ENCODE measurements at regions of chr7 and their contacts with region 1.

Region 1: GRCh38 chr7:149662591-149663095 is 110.7 kb downstream of the ZNF467 start:
- DNase-seq: peak; percentile 92
- ATAC-seq: peak; percentile 99
- H3K4me3 Mint-ChIP-seq: no peak overlapping the region
- H3K27ac Mint-ChIP-seq: no peak overlapping the region
- H3K4me1 Mint-ChIP-seq: peaks cover 4% of the 10 kb centered on the region; the same call in 1 of the 2 replicates
- H3K27me3 Mint-ChIP-seq: peaks cover 32% of the 10 kb centered on the region
- CTCF ChIP-seq: peak; percentile 50

Region 2: GRCh38 chr7:149642589-149642988 is 20.1 kb before region 1 on chr7:
- CTCF ChIA-PET with region 1: interaction called, 25 read pairs
- POLR2A ChIA-PET with region 1: no interaction called
- DNase-seq: no peak
- ATAC-seq: no peak
- H3K4me3 Mint-ChIP-seq: no peak overlapping the region
- H3K27ac Mint-ChIP-seq: no peak overlapping the region
- H3K4me1 Mint-ChIP-seq: no peaks in the 10 kb centered on the region
- H3K27me3 Mint-ChIP-seq: peaks cover 21% of the 10 kb centered on the region
- CTCF ChIP-seq: no peak

Region 3: DNA sequence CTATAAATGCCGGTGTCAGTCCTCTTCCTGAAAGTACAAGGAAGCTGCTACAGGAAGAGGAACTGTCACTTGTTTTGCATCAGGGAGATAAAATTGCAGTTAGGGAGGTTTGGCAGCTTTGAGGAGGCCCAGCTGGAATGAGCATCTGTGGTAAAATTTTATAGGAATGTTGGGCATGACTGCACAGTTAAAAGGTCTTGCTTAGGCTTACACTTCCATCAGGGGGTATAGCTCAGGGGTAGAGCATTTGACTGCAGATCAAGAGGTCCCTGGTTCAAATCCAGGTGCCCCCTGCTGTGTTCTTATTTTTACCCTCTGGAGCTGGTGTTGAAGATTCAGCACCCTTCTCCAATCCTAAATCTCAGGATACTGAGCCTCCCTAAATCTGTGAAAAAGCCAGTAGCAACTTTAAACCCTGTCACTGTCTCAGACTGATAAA is 44.8 kb after region 1 on chr7:
- CTCF ChIA-PET with region 1: interaction called, 164 read pairs
- POLR2A ChIA-PET with region 1: interaction called, 4 read pairs
- DNase-seq: no peak
- ATAC-seq: no peak
- H3K4me3 Mint-ChIP-seq: no peak overlapping the region
- H3K27ac Mint-ChIP-seq: no peak overlapping the region
- H3K4me1 Mint-ChIP-seq: peaks cover 24% of the 10 kb centered on the region
- H3K27me3 Mint-ChIP-seq: peaks cover 12% of the 10 kb centered on the region
- CTCF ChIP-seq: no peak

Region 4: DNA sequence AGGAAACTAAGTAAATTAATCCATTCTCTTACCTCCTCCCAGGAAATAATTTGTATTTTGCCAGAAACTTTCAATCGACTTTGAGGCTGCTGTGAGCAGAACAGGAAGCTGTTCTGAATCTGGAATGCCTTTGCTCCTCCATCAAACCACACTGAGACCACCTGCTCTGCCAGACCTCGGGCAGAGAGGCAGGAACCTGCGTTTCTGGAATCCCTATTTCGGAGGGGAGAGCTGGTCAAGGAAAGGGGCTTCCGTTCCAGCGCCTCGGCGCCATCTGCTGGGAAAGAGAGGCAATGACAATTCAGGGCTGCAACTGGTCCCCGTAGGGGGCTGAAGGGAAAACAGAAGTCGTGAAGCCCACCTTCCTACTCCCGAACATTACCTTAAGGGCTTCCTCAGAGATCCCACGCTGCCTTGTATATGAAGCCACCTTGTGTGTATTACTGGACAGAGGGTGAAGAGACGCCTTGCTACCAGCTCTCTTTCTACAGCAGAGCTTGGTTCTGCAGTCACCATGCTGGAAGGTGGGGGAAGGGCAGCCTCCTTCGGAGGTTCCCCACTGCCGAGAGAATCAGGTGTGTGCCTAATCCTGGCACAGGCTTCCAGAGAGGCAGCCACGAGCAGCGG is 79.5 kb after region 1 on chr7:
- CTCF ChIA-PET with region 1: interaction called, 140 read pairs
- POLR2A ChIA-PET with region 1: interaction called, 5 read pairs
- DNase-seq: peak; percentile 88
- ATAC-seq: peak; percentile 96
- H3K4me3 Mint-ChIP-seq: peak overlapping the region; percentile 73
- H3K27ac Mint-ChIP-seq: no peak overlapping the region
- H3K4me1 Mint-ChIP-seq: peaks cover 3% of the 10 kb centered on the region
- H3K27me3 Mint-ChIP-seq: peaks cover 15% of the 10 kb centered on the region
- CTCF ChIP-seq: peak; percentile 75

Region 5: DNA sequence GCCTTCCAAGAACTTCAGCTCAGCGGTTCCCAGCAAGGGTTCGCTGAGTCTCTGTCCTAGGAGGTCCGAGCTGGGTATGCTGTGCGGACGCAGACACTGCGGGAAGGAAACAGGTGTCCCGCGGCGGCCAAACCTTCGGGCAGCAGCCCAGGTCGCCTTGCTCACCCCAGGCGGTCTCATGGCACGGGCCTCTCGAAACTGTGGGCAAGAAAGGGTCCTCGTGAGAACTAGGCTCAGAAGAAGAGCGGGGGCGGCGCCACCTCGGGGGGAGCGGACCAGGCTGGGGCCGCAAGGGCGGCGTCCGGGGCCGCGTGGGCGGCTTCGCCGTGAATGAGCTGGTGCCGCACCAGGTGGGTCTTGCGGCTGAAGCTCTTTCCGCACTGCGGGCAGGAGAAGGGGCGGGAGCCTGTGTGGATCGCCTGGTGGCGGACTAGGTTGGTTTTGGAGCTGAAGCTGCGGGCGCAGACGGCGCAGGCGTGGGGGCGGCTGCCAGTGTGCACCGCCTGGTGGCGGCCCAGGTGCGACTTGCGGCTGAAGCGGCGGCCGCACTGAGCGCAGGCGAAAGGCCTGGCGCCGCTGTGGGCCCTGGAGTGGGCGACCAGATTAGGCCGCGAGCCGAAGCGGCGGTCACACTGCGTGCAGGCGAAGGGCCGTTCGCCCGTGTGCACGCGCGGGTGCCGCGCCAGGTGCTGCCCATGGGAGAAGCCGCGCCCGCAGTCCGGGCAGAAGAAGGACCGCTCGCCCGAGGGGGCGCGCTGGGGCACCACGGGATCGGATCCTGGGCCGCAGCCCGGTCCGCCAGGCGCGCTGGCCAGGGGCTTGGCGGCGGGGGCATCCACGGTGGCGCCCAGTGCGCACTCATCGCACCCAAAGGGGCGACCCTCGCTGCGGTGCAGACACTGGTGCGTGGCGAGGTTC is 102.1 kb after region 1 on chr7:
- CTCF ChIA-PET with region 1: interaction called, 37 read pairs
- POLR2A ChIA-PET with region 1: no interaction called
- DNase-seq: peak; percentile 71
- ATAC-seq: peak; percentile 78
- H3K4me3 Mint-ChIP-seq: peak overlapping the region; percentile 75
- H3K27ac Mint-ChIP-seq: no peak overlapping the region
- H3K4me1 Mint-ChIP-seq: peaks cover 12% of the 10 kb centered on the region
- H3K27me3 Mint-ChIP-seq: peaks cover 100% of the 10 kb centered on the region
- CTCF ChIP-seq: no peak

Region 6: GRCh38 chr7:149838224-149838947 is 175.7 kb after region 1 on chr7 and contains the start of gene ZNF862:
- CTCF ChIA-PET with region 1: interaction called, 11 read pairs
- POLR2A ChIA-PET with region 1: no interaction called
- DNase-seq: peak; percentile 98
- ATAC-seq: peak; percentile 97
- H3K4me3 Mint-ChIP-seq: peak within 1 kb of the TSS; percentile 78
- H3K27ac Mint-ChIP-seq: peak within 1 kb of the TSS; percentile 77; the same call in 1 of the 2 replicates
- H3K4me1 Mint-ChIP-seq: peaks cover 13% of the 10 kb centered on the region
- H3K27me3 Mint-ChIP-seq: peaks cover 27% of the 10 kb centered on the region
- CTCF ChIP-seq: no peak
- total RNA-seq, gene ZNF862: 3.6 to 6.3 TPM (median 5.8 TPM) in 3 replicates

Measured in WTC11 (cell line).